Tibial artery (tissue), 4 donors: ENCODE measurements at regions of chr15 and their contacts with region 1.

Region 1: GRCh38 chr15:83207622-83208411 is at the start of gene HDGFL3:
- DNase-seq: peak; percentile 59 to 82
- H3K4me3 ChIP-seq: peak within 1 kb of the TSS; percentile 89 to 91
- H3K27ac ChIP-seq: peak within 1 kb of the TSS; percentile 91 to 93
- H3K4me1 ChIP-seq: peaks cover 0 to 37% (median 15%) of the 10 kb centered on the region in 4 donors
- H3K27me3 ChIP-seq: no peaks in the 10 kb centered on the region
- CTCF ChIP-seq: no peak

Region 2: DNA sequence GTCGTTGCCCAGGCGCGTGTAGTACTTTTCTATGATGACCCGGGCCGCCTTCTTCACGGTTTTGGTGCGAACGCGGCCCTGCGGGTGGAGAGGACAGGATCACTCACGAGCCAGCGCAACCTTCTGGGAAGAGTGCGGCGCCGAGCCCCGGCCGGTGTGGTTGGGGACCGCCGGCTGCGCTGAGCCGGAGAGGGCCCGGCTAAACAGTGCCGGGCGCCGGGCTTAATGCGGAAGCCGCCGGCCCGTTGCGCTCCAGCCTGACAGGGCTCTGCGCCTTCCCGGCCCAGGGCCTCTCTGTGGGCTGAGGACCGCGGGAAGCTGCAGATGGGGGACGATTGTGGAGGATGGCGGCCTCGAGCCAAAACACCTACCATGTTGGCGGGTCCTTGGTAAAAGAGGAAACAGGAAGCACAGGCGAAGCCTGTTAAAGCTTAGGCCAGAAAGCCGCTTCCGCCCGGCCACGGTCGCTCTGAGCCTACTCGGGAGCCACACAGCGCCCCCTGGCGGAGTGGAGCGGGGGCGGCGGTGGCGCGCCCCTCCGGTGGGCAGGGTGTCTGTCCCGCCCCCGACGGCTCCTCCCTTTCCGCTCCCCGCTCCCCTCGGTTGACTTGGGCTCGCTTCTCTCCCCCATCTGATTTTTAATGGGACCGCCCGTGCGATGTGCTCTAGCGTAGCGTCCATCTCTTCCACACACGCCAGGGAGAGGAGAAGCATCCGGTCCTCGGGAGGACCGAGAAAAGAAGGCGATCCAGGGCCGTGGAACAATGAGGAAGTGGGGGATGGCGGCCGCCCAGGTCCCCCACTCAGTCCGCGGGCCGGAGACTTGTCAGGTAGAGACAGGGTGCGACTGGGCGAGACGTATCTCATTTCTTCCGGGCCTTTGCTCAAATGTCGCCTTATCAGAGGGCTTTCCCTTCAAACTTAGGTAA is 667.5 kb before region 1 on chr15 and contains the start of gene RPS17:
- intact Hi-C with region 1: loop called (anchors 10 kb)
- DNase-seq: peak; percentile 96 to 98
- H3K4me3 ChIP-seq: peak within 1 kb of the TSS; percentile 77 to 83
- H3K27ac ChIP-seq: peak within 1 kb of the TSS; percentile 87
- H3K4me1 ChIP-seq: peaks cover 0 to 34% (median 13%) of the 10 kb centered on the region in 4 donors
- H3K27me3 ChIP-seq: no peaks in the 10 kb centered on the region
- CTCF ChIP-seq: peak; percentile 99

Region 3: GRCh38 chr15:82730022-82730530 is 477.7 kb before region 1 on chr15:
- intact Hi-C with region 1: no loop called
- DNase-seq: no peak
- H3K4me3 ChIP-seq: no peak overlapping the region
- H3K27ac ChIP-seq: no peak overlapping the region
- H3K4me1 ChIP-seq: no peaks in the 10 kb centered on the region
- H3K27me3 ChIP-seq: no peaks in the 10 kb centered on the region
- CTCF ChIP-seq: no peak

Region 4: DNA sequence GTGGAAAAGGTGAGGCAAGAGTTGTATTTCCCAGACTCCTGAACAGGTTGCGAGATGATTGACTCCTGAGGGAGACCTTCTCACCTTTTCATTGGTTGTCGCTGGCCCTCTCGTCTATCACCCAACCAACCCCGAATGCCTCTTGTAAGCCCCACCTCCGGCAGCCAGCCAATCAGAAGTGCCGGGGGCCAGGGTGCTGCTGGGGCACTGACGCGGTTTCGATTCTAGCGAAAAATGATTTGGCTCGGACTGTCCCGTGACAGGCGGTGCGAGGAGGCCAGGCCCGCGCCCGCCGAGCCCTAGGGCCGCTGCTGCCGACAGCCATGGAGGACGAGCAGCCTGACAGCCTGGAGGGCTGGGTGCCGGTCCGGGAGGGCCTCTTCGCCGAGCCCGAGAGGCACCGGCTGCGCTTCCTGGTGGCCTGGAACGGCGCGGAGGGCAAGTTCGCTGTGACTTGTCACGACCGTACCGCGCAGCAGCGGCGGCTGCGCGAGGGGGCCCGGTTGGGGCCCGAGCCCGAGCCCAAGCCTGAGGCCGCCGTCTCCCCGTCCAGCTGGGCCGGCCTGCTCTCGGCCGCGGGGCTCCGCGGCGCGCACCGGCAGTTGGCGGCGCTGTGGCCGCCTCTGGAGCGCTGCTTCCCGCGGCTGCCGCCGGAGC is 398.3 kb before region 1 on chr15 and contains the start of gene WHAMM:
- intact Hi-C with region 1: loop called (anchors 10 kb)
- DNase-seq: peak; percentile 99 to 100
- H3K4me3 ChIP-seq: peak within 1 kb of the TSS; percentile 92 to 98
- H3K27ac ChIP-seq: peak within 1 kb of the TSS; percentile 96 to 99
- H3K4me1 ChIP-seq: peaks cover 0 to 31% (median 13%) of the 10 kb centered on the region in 4 donors
- H3K27me3 ChIP-seq: no peaks in the 10 kb centered on the region
- CTCF ChIP-seq: no peak

Region 5: GRCh38 chr15:83011271-83012075 is 196.3 kb before region 1 on chr15 and contains the start of gene C15orf40:
- intact Hi-C with region 1: loop called (anchors 5 kb)
- DNase-seq: peak; percentile 83 to 93
- H3K4me3 ChIP-seq: peak within 1 kb of the TSS; percentile 93 to 95
- H3K27ac ChIP-seq: peak within 1 kb of the TSS; percentile 71 to 87
- H3K4me1 ChIP-seq: peaks cover 4 to 21% (median 18%) of the 10 kb centered on the region in 4 donors
- H3K27me3 ChIP-seq: no peaks in the 10 kb centered on the region
- CTCF ChIP-seq: peak; percentile 65 to 69